Psoas muscle (tissue), 8 donors: ENCODE measurements at regions of chr12 and their contacts with region 1.

Region 1: DNA sequence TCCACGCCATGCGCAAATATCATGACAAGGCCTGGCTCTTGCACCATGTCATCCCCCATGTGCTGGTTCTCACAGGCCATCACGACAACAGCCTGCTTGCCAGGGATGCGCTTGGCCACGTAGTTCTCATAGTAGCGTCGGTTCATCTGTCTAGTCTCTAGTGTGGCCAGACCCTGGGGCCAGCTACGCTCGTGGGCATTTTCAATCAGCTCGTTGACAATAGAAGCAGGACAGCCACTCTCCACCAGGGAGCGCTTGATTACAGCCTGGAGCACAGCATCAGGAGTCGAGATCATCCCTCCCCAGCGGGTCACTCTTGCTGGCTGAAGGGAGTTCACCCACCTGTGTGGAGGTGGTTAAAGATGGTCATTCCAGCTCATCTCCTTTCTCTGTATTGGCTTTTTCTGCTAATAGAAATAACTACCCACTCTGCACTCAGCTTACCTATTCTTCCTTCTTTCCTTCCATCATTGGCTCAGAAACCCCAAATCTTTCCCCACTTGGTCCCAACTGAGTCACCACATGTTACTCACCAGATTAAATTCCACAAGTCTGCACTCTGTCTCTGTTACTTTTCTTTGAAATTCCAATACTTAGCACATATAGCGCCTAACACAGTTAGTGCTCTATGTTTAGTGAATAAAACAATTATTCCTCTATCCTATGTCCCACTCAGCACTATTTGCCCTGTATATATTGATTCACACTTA is 15.1 kb downstream of the RNF41 start:
- DNase-seq: peak; percentile 43 to 71
- ATAC-seq: peak; percentile 65 to 83 (median 72)
- H3K4me3 ChIP-seq: no peak overlapping the region
- H3K27ac ChIP-seq: no peak overlapping the region
- H3K4me1 ChIP-seq: no peaks in the 10 kb centered on the region
- H3K27me3 ChIP-seq: no peaks in the 10 kb centered on the region
- CTCF ChIP-seq: peak; percentile 57

Region 2: DNA sequence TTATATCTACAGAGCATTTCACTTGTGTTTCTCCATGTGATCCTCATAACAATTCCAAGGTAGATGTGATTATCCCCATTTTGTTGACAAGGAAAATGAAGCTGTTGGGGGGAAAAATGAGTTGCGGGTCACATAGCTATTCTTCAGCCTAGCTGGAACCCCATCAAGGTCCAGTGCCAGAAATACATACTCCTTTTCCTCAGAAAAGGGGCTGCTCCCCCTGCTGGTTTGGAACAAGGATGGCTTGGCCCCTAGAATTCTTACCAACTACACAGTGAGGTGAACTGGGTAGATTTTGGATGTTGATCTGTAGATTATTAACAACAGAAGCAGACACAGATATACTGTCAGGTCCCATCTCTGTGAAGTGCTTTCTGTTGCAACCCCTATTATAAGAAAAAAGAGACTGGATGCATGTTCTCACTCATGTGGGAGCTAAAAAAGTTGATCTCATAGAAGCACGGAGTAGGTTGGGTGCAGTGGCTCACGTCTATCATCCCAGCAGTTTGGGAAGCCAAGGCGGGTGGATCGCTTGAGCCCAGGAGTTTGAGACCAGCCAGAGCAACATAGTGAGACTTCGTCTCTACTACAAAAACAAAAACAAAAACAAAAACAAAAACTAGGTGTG is 176.8 kb before region 1 on chr12:
- intact Hi-C with region 1: no loop called
- DNase-seq: no peak
- ATAC-seq: peak in 1 of 4 donors; percentile 69
- H3K4me3 ChIP-seq: no peak overlapping the region
- H3K27ac ChIP-seq: no peak overlapping the region
- H3K4me1 ChIP-seq: no peaks in the 10 kb centered on the region
- H3K27me3 ChIP-seq: no peaks in the 10 kb centered on the region
- CTCF ChIP-seq: peak; percentile 50

Region 3: GRCh38 chr12:56461235-56462159 is 254.9 kb after region 1 on chr12:
- intact Hi-C with region 1: loop called in 1 of 2 experiments (anchors 5 kb)
- DNase-seq: no peak
- ATAC-seq: no peak
- H3K4me3 ChIP-seq: no peak overlapping the region
- H3K27ac ChIP-seq: no peak overlapping the region
- H3K4me1 ChIP-seq: no peaks in the 10 kb centered on the region
- H3K27me3 ChIP-seq: no peaks in the 10 kb centered on the region
- CTCF ChIP-seq: no peak